Activated CD4-positive, alpha-beta memory T cell treated with anti-CD3 and anti-CD28 coated beads for 36 hours (primary cell): ENCODE measurements at regions of chr20 and their contacts with region 1.

Region 1: GRCh38 chr20:37384683-37385174 is 38.8 kb downstream of the SRC start:
- DNase-seq: peak; percentile 85
- H3K4me3 Mint-ChIP-seq: peak overlapping the region; percentile 59
- H3K27ac Mint-ChIP-seq: no peak overlapping the region
- H3K4me1 Mint-ChIP-seq: peaks cover 7% of the 10 kb centered on the region
- H3K27me3 Mint-ChIP-seq: peaks cover 1% of the 10 kb centered on the region

Region 2: DNA sequence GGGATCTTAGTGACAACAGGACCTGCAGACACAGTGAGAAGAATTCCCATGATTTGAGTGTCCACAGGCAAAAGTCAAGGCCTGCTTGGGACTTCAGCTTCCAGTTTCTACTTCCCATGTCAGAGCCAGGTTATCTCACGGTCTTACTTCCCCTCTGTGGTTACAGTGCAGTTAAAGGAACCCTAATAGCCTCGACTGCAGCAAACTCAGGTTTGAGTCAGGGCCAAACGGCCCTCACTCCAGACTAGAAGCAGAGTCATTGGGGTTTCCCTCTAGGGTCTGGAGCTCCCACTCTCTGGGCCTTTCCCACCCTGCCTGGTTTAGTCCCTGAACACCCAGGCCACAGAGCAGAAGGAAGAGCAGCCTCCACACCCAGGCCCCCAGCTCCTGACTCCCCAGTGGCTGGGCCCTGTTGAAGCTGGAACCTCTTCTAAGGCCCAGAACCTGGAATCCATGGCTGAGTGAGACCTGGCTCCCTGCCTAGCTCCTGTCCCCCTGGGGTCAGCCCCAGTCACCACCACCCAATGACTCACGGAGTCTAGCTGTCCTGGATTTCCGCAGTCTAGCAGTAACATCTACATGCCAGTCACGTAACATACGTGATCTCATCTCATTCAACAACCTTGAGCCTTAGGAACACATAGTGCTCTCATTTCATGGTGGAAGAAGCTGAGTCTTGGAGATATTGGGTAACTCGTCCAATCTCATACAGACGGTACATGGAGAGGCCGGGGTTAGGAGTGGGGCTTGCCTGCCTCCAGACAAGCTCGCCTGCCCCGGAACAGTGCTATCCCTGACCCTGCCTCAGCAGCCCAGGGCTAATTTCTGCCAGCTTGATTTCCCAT is 113.9 kb before region 1 on chr20:
- CTCF ChIA-PET with region 1: interaction called, 58 read pairs
- POLR2A ChIA-PET with region 1: no interaction called
- intact Hi-C with region 1: loop called (anchors 1 kb)
- DNase-seq: no peak
- H3K4me3 Mint-ChIP-seq: no peak overlapping the region
- H3K27ac Mint-ChIP-seq: no peak overlapping the region
- H3K4me1 Mint-ChIP-seq: no peaks in the 10 kb centered on the region
- H3K27me3 Mint-ChIP-seq: no peaks in the 10 kb centered on the region

Region 3: DNA sequence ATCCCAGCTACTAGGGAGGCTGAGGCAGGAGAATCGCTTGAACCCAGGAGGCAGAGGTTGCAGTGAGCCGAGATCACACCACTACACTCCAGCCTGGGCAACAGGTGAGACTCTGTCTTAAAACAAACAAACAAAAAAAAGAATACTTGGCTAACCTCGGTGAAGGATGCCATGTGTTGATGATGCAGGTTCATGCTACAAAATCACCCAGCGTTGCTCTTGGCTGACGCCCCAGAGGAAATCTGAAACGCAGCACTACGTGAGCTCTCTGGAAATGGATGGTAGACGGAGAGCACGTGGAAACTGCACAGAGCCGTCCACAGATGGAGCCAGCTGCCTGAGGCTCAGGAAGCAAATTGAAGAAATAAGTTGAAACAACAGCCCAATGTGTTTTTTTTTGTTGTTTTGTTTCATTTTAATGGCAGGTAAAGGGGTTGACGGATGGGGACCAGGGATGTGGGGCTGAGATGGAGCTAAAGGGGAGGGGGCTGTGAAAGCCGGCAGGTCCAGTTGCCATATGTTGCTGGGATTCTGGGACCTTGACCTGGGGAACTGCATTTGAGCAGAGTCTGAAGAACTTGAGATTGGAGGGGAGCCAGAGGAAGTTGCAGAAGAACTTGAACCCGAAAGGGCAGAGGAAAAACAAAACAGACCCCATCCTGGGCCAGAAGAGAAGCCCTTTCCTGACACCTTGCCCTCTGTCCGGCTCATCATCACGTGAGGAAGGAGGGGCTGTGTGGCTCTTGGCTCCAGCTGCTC is 108.1 kb before region 1 on chr20:
- CTCF ChIA-PET with region 1: interaction called, 58 read pairs
- POLR2A ChIA-PET with region 1: no interaction called
- intact Hi-C with region 1: loop called (anchors 2 kb)
- DNase-seq: peak; percentile 39
- H3K4me3 Mint-ChIP-seq: no peak overlapping the region
- H3K27ac Mint-ChIP-seq: no peak overlapping the region
- H3K4me1 Mint-ChIP-seq: peaks cover 4% of the 10 kb centered on the region
- H3K27me3 Mint-ChIP-seq: no peaks in the 10 kb centered on the region

Region 4: DNA sequence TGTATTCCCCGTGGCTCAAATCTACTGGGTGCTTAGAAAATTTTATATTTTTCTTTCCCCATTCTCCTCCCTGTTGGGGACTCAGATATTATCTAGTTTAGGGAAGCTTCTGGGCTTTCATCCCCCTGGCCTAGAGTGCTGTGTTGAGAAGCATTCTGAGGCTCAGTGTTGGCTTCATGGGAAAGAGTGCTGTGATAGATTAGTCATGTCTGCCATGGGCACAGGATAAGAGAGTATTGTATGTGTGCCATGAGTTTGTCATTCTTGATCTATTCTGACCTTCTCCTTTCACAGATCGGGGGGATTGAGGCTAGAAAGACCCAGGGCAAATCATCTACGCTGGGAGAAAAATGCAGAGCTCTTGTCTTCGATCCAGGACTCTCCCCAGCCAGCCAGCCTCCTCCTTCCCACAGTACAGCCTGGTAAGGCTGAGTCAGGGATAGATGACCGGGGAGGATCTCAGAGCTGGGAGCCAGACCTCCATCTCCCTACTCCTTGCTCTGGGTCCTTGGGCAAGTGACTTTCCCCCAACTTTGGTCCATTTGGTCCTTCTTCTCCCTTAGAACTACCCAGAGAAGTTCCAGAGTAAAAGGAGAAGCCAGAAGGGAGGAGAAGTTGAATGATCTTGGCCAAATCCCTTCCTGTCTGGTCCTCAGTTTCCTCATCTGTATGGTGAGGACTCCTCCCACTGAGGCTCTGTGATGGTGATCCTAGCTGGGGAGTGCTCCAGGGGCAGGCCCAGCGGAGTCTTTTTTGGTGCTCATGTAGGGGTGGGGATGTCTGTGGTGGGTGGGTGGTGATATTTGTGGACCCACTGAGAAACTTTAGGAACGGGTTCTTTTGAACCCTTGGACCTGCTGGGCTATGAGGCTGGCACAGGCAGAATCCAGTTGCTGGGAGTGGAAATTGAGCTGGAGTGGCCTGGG is 33.8 kb before region 1 on chr20:
- CTCF ChIA-PET with region 1: interaction called, 13 read pairs
- POLR2A ChIA-PET with region 1: no interaction called
- intact Hi-C with region 1: no loop called
- DNase-seq: no peak
- H3K4me3 Mint-ChIP-seq: no peak overlapping the region
- H3K27ac Mint-ChIP-seq: no peak overlapping the region
- H3K4me1 Mint-ChIP-seq: peaks cover 10% of the 10 kb centered on the region
- H3K27me3 Mint-ChIP-seq: no peaks in the 10 kb centered on the region

Region 5: GRCh38 chr20:37534401-37535157 is 149.8 kb after region 1 on chr20:
- CTCF ChIA-PET with region 1: interaction called, 12 read pairs
- POLR2A ChIA-PET with region 1: no interaction called
- intact Hi-C with region 1: no loop called
- DNase-seq: peak; percentile 37
- H3K4me3 Mint-ChIP-seq: no peak overlapping the region
- H3K27ac Mint-ChIP-seq: no peak overlapping the region
- H3K4me1 Mint-ChIP-seq: peaks cover 4% of the 10 kb centered on the region
- H3K27me3 Mint-ChIP-seq: peaks cover 2% of the 10 kb centered on the region

Region 6: GRCh38 chr20:37804584-37805566 is 420.1 kb after region 1 on chr20:
- CTCF ChIA-PET with region 1: no interaction called
- POLR2A ChIA-PET with region 1: no interaction called
- intact Hi-C with region 1: no loop called
- DNase-seq: no peak
- H3K4me3 Mint-ChIP-seq: no peak overlapping the region
- H3K27ac Mint-ChIP-seq: no peak overlapping the region
- H3K4me1 Mint-ChIP-seq: no peaks in the 10 kb centered on the region
- H3K27me3 Mint-ChIP-seq: no peaks in the 10 kb centered on the region